Activated CD4-positive, alpha-beta T cell treated with anti-CD3 and anti-CD28 coated beads, Interleukin-2, amount 10 ng/mL, durations not matched to agents 7 days and 5 days (primary cell): ENCODE measurements at regions of chr22 and their contacts with region 1.

Region 1: DNA sequence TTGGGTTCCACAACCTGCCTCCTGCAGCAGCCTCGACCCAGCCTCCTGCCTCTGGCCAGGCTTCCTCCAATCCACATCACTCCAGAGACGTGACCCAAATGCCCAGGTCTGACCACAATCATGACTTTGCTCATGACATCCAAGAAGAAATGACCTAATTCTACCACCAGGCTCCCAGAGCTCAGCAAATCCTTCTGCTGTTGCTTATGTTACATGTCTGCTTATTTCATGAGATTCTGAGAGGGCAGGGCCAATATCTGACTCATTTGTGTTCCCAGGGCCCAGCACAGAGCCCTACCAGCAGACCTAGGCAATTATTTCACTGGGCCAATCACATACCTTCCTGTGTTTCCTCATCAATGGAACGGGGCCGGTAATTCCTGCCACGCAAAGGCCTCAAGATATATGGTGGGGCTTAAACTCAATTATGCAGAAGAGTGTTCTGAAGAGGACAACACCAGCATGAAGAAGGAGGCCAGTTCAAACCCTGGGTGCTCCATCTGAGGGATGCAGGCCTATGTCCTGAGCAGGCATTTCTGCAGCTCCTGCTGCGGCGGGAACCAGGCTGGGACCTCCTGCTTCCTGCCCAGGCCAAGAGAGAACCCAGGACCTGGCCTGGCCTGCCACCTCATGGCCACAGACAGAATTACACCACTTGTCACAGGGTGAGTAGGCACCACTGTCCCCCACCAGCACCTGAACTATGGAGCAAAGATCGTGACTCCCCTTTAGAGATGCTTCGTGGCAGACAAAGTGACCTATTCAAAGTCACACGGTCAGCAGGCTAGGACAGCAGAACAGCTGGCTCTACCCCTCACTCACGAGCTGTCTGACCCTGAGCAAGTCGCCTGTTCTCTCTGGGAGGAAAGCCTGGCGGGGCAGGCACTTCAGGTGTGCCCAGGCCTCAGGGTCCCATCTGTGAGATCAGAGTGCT is 5.9 kb downstream of the CENPM start:
- DNase-seq: peak; percentile 89
- H3K4me3 Mint-ChIP-seq: peak overlapping the region; percentile 6
- H3K27ac Mint-ChIP-seq: peak overlapping the region; percentile 99
- H3K4me1 Mint-ChIP-seq: peaks cover 56% of the 10 kb centered on the region
- H3K27me3 Mint-ChIP-seq: no peaks in the 10 kb centered on the region

Region 2: DNA sequence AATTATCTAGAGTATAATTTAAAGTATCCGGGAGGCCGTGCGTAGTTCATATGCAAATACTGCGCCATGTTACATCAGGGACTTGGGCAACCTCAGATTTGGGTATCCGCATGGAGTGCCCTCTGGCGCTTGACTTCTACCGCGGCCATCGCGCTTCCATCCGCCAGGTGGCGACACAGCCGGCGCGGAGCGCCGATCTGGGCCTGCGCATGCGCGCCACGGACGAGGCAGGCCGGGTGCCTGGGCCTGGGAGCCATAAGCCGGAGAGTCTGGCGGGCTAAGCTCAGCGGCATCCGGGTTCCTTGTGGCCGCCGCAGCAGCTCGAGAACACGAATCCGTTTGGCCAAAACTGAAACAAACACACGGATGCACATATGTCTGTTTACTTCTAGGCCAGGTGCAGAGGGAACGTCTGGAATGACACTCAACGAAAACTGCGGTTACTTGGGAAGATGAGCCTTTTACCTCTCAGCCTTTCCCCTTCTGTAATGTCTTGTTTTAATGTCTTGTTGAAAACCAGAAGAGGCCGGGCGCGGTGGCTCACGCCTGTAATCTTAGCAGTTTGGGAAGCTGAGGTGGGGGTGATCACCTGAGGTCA is 274.3 kb before region 1 on chr22:
- CTCF ChIA-PET with region 1: interaction called, 18 read pairs
- POLR2A ChIA-PET with region 1: no interaction called
- DNase-seq: peak; percentile 93
- H3K4me3 Mint-ChIP-seq: peak overlapping the region; percentile 72
- H3K27ac Mint-ChIP-seq: peak overlapping the region; percentile 92
- H3K4me1 Mint-ChIP-seq: peaks cover 15% of the 10 kb centered on the region
- H3K27me3 Mint-ChIP-seq: no peaks in the 10 kb centered on the region

Region 3: GRCh38 chr22:41688365-41689211 is 252.5 kb before region 1 on chr22 and contains the start of gene SNU13:
- CTCF ChIA-PET with region 1: interaction called, 10 read pairs
- POLR2A ChIA-PET with region 1: no interaction called
- DNase-seq: peak; percentile 95
- H3K4me3 Mint-ChIP-seq: peak within 1 kb of the TSS; percentile 96
- H3K27ac Mint-ChIP-seq: peak within 1 kb of the TSS; percentile 98
- H3K4me1 Mint-ChIP-seq: peaks cover 36% of the 10 kb centered on the region
- H3K27me3 Mint-ChIP-seq: no peaks in the 10 kb centered on the region
- total RNA-seq, gene SNU13: 171 to 178 TPM

Region 4: DNA sequence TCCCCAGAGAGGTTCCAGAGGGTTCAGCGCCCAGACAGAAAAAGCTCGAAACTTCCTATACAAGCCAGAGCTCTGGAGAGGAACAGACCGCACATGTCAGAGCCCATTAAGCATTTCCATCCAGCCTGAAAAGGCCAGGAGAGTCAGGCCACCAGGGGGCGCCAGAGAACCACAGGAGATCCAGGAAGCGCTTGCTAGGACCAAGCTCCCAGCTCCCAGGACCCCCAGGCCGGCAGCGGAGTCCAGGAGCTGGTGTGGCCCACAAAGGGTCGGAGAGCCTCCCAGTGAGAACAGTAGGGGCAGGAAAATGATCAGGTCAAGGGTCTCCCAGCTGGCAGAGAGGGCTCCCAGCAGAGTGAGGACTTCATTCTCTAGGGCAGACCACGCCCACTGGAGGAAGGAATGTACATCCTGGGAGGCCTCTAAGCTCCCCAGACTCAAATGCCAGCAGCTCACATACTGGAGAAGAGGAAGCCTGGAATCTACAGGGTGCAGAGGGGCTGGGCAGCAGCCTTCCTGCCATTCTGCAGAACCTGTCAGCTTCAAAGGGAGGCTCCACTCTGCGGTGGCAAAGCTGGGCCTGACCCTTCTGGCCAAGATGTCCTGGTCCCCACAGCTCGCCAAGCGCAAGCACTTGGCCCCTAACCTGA is 243.8 kb before region 1 on chr22:
- CTCF ChIA-PET with region 1: interaction called, 37 read pairs
- POLR2A ChIA-PET with region 1: interaction called, 4 read pairs
- DNase-seq: peak; percentile 93
- H3K4me3 Mint-ChIP-seq: no peak overlapping the region
- H3K27ac Mint-ChIP-seq: peak overlapping the region; percentile 88
- H3K4me1 Mint-ChIP-seq: peaks cover 16% of the 10 kb centered on the region
- H3K27me3 Mint-ChIP-seq: no peaks in the 10 kb centered on the region

Region 5: GRCh38 chr22:41826430-41827383 is 114.4 kb before region 1 on chr22:
- CTCF ChIA-PET with region 1: interaction called, 15 read pairs
- POLR2A ChIA-PET with region 1: no interaction called
- DNase-seq: no peak
- H3K4me3 Mint-ChIP-seq: no peak overlapping the region
- H3K27ac Mint-ChIP-seq: peak overlapping the region; percentile 3
- H3K4me1 Mint-ChIP-seq: peaks cover 24% of the 10 kb centered on the region
- H3K27me3 Mint-ChIP-seq: no peaks in the 10 kb centered on the region

Region 6: DNA sequence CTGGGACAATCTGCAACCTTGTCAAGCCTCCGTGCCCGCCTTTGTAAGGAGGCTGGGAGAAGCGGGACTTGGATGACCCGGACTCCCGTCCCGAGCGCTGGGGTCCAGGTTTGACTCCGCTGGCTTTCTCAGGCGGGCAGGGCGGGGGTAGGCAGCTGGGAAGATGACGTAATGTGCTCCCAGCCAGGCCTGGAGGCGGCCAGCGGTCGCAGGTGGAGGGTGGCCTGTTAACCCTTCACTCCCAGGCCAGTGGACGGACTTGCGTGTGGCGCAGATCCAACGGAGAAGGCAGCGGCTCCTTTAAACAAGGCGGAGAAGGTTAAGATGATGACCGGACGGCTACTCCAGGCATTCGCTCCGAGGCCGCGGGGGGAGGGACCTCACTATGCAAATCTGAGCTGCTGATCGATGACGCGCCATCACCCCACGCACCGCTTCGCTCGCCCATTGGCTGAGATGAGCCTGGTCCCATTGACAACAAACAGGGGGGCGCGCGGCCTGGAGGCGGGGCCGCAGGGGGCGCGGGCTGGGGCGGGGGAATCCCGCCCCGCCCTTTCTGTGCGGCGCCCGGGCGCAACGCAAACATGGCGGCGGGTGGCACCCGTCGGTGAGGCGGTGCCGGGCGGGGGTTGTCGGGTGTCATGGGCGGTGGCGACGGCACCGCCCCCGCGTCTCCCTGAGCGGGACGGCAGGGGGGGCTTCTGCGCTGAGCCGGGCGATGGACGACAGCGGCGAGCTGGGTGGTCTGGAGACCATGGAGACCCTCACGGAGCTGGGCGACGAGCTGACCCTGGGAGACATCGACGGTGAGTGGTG is 108.3 kb before region 1 on chr22 and contains the start of gene SREBF2:
- CTCF ChIA-PET with region 1: interaction called, 11 read pairs
- POLR2A ChIA-PET with region 1: no interaction called
- DNase-seq: peak; percentile 100
- H3K4me3 Mint-ChIP-seq: peak within 1 kb of the TSS; percentile 93
- H3K27ac Mint-ChIP-seq: peak within 1 kb of the TSS; percentile 100
- H3K4me1 Mint-ChIP-seq: peaks cover 47% of the 10 kb centered on the region
- H3K27me3 Mint-ChIP-seq: no peaks in the 10 kb centered on the region
- total RNA-seq, gene SREBF2: 92.4 to 95.7 TPM

Region 7: DNA sequence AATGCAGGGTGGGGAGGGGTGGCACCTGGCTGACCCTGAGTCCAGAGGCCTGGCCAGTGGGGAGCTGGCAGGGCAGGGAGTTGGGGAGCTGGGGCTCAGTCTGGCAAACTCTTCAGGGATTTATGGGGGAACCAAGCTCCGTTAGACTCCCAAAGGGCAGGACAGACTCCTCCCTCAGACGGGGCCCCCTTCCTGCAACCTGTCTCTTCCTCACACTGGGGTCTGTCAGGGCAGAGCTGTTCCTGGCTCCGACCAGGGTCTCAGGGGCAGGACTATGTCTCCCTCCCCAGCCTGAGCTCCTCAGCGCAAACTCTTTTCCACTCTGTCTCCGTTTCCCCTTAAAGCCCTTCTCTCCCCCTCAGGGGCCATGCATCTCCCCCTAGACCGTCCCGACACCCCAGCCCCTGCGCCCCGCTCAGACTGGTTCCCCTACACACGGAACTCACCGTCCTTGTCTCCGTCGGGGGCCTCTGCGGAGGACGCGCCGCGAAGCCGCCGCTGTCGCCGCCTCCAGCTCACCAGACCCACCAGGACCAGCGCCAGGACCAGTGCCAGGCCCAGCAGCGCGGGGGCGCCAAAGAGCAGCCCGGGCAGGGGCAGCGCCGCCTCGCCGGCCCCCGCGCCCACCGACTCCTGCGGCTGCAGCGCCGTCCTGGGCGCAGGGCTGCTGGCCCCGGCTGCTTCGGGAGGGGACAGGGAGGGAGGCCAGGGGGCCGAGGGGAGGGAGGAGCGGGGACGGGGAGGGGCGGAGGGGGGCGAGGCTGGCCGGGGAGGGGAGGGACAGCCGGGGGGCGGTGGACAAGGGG is 15.2 kb before region 1 on chr22:
- CTCF ChIA-PET with region 1: interaction called, 19 read pairs
- POLR2A ChIA-PET with region 1: no interaction called
- DNase-seq: peak; percentile 75
- H3K4me3 Mint-ChIP-seq: peak overlapping the region; percentile 53
- H3K27ac Mint-ChIP-seq: no peak overlapping the region
- H3K4me1 Mint-ChIP-seq: peaks cover 11% of the 10 kb centered on the region
- H3K27me3 Mint-ChIP-seq: peaks cover 24% of the 10 kb centered on the region